Naive thymus-derived CD4-positive, alpha-beta T cell (primary cell): ENCODE measurements at regions of chr1 and their contacts with region 1.

Region 1: GRCh38 chr1:86913896-86914634 is at the start of gene SELENOF:
- DNase-seq: peak; percentile 94 to 100 (median 99)
- ATAC-seq: peak; percentile 93
- H3K4me3 ChIP-seq: peak within 1 kb of the TSS; percentile 96
- H3K4me3 Mint-ChIP-seq: no peak within 1 kb of the TSS
- H3K27ac ChIP-seq: peak within 1 kb of the TSS; percentile 89
- H3K27ac Mint-ChIP-seq: no peak within 1 kb of the TSS
- H3K4me1 ChIP-seq: peaks cover 15 to 32% of the 10 kb centered on the region in 2 donors
- H3K4me1 Mint-ChIP-seq: peaks cover 6 to 50% (median 43%) of the 10 kb centered on the region in 7 donors
- H3K27me3 ChIP-seq: no peaks in the 10 kb centered on the region
- H3K27me3 Mint-ChIP-seq: no peaks in the 10 kb centered on the region
- total RNA-seq, gene SELENOF: 109 to 196 (median 133) TPM

Region 2: GRCh38 chr1:85707990-85708828 is 1205.9 kb before region 1 on chr1 and contains the start of gene ZNHIT6:
- CTCF ChIA-PET with region 1: no interaction called
- POLR2A ChIA-PET with region 1: no interaction called
- intact Hi-C with region 1: loop called (anchors 1 to 2 kb)
- DNase-seq: peak; percentile 62 to 94 (median 89)
- ATAC-seq: peak; percentile 99
- H3K4me3 ChIP-seq: peak within 1 kb of the TSS; percentile 90
- H3K4me3 Mint-ChIP-seq: no peak within 1 kb of the TSS
- H3K27ac ChIP-seq: peak within 1 kb of the TSS; percentile 77
- H3K27ac Mint-ChIP-seq: no peak within 1 kb of the TSS
- H3K4me1 ChIP-seq: peaks cover 14 to 21% of the 10 kb centered on the region in 2 donors
- H3K4me1 Mint-ChIP-seq: peaks cover 11 to 33% (median 18%) of the 10 kb centered on the region in 7 donors
- H3K27me3 ChIP-seq: no peaks in the 10 kb centered on the region
- H3K27me3 Mint-ChIP-seq: no peaks in the 10 kb centered on the region
- total RNA-seq, gene ZNHIT6: 13.8 to 22.2 (median 20.2) TPM

Region 3: DNA sequence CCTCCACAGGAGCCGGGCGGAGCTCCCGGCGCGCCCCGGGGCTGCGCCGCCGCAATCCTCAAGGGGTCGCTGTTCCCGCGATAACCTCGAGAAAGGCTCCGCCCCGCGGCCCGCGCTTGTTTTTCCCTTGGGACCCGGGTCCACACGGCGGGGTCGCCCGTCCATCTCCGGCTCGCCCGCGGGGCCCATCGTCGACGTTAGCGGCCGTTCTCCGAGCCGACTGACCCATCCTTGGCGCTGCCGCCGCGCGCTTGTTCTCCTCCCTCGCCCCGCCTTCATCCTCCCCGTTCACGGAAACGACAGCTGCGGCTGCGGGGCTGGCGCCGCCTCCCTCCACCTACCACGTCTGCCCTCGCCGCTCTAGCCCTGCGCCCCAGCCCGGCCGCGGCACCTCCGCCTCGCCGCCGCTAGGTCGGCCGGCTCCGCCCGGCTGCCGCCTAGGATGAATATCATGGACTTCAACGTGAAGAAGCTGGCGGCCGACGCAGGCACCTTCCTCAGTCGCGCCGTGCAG is 209.6 kb before region 1 on chr1 and contains the start of gene SH3GLB1:
- CTCF ChIA-PET with region 1: interaction called, 3 read pairs
- POLR2A ChIA-PET with region 1: interaction called, 37 read pairs
- intact Hi-C with region 1: loop called (anchors 1 kb)
- DNase-seq: peak; percentile 83 to 93 (median 92)
- ATAC-seq: peak; percentile 93
- H3K4me3 ChIP-seq: peak within 1 kb of the TSS; percentile 83
- H3K4me3 Mint-ChIP-seq: peak within 1 kb of the TSS; percentile 95 to 99 (median 97)
- H3K27ac ChIP-seq: peak within 1 kb of the TSS; percentile 86
- H3K27ac Mint-ChIP-seq: peak within 1 kb of the TSS; percentile 96 to 99 (median 97)
- H3K4me1 ChIP-seq: peaks cover 16 to 17% of the 10 kb centered on the region in 2 donors
- H3K4me1 Mint-ChIP-seq: peaks cover 34 to 67% (median 56%) of the 10 kb centered on the region in 7 donors
- H3K27me3 ChIP-seq: no peaks in the 10 kb centered on the region
- H3K27me3 Mint-ChIP-seq: no peaks in the 10 kb centered on the region
- total RNA-seq, gene SH3GLB1: 36.7 to 72.0 (median 49.8) TPM

Region 4: GRCh38 chr1:86872086-86872485 is 42.0 kb before region 1 on chr1:
- CTCF ChIA-PET with region 1: no interaction called
- POLR2A ChIA-PET with region 1: no interaction called
- intact Hi-C with region 1: loop called in 1 of 2 experiments (anchors 5 kb)
- DNase-seq: no peak
- ATAC-seq: no peak
- H3K4me3 ChIP-seq: no peak overlapping the region
- H3K4me3 Mint-ChIP-seq: no peak overlapping the region
- H3K27ac ChIP-seq: no peak overlapping the region
- H3K27ac Mint-ChIP-seq: no peak overlapping the region
- H3K4me1 ChIP-seq: no peaks in the 10 kb centered on the region
- H3K4me1 Mint-ChIP-seq: peaks cover 7 to 31% (median 13%) of the 10 kb centered on the region in 7 donors
- H3K27me3 ChIP-seq: no peaks in the 10 kb centered on the region
- H3K27me3 Mint-ChIP-seq: no peaks in the 10 kb centered on the region

Region 5: GRCh38 chr1:87024936-87025540 is 111.0 kb after region 1 on chr1:
- CTCF ChIA-PET with region 1: no interaction called
- POLR2A ChIA-PET with region 1: no interaction called
- intact Hi-C with region 1: no loop called
- DNase-seq: no peak
- ATAC-seq: peak; percentile 42
- H3K4me3 ChIP-seq: no peak overlapping the region
- H3K4me3 Mint-ChIP-seq: no peak overlapping the region
- H3K27ac ChIP-seq: no peak overlapping the region
- H3K27ac Mint-ChIP-seq: peak overlapping the region in 1 of 9 donors; percentile 11
- H3K4me1 ChIP-seq: no peaks in the 10 kb centered on the region
- H3K4me1 Mint-ChIP-seq: peaks cover 2 to 17% (median 8%) of the 10 kb centered on the region in 7 donors
- H3K27me3 ChIP-seq: no peaks in the 10 kb centered on the region
- H3K27me3 Mint-ChIP-seq: no peaks in the 10 kb centered on the region

Region 6: GRCh38 chr1:87045761-87046304 is 131.8 kb after region 1 on chr1:
- CTCF ChIA-PET with region 1: no interaction called
- POLR2A ChIA-PET with region 1: no interaction called
- intact Hi-C with region 1: loop called (anchors 1 to 2 kb)
- DNase-seq: peak; percentile 7 to 91 (median 85)
- ATAC-seq: peak; percentile 82
- H3K4me3 ChIP-seq: no peak overlapping the region
- H3K4me3 Mint-ChIP-seq: peak overlapping the region; percentile 31 to 87 (median 64)
- H3K27ac ChIP-seq: peak overlapping the region; percentile 58
- H3K27ac Mint-ChIP-seq: peak overlapping the region; percentile 52 to 100 (median 94)
- H3K4me1 ChIP-seq: peaks cover 10 to 21% of the 10 kb centered on the region in 2 donors
- H3K4me1 Mint-ChIP-seq: peaks cover 24 to 72% (median 60%) of the 10 kb centered on the region in 7 donors
- H3K27me3 ChIP-seq: no peaks in the 10 kb centered on the region
- H3K27me3 Mint-ChIP-seq: no peaks in the 10 kb centered on the region